Transverse colon (tissue), 4 donors: ENCODE measurements at regions of chr5 and their contacts with region 1.

Region 1: GRCh38 chr5:144260121-144260520 is 89.4 kb downstream of the KCTD16 start:
- DNase-seq: no peak
- H3K4me3 ChIP-seq: no peak overlapping the region
- H3K27ac ChIP-seq: no peak overlapping the region
- H3K4me1 ChIP-seq: no peaks in the 10 kb centered on the region
- H3K27me3 ChIP-seq: no peaks in the 10 kb centered on the region
- CTCF ChIP-seq: no peak
- EP300 ChIP-seq: no peak
- POLR2A ChIP-seq: no peak

Region 2: GRCh38 chr5:143094087-143094521 is 1166.0 kb before region 1 on chr5:
- in situ Hi-C with region 1: no loop called
- intact Hi-C with region 1: loop called (anchors 5 kb)
- DNase-seq: no peak
- H3K4me3 ChIP-seq: peak overlapping the region in 1 of 4 donors; percentile 13
- H3K27ac ChIP-seq: no peak overlapping the region
- H3K4me1 ChIP-seq: peaks cover 0 to 5% (median 0%) of the 10 kb centered on the region in 4 donors
- H3K27me3 ChIP-seq: no peaks in the 10 kb centered on the region
- CTCF ChIP-seq: no peak
- EP300 ChIP-seq: no peak
- POLR2A ChIP-seq: no peak

Region 3: GRCh38 chr5:144219869-144220268 is 40.3 kb before region 1 on chr5:
- in situ Hi-C with region 1: no loop called
- intact Hi-C with region 1: no loop called
- DNase-seq: no peak
- H3K4me3 ChIP-seq: no peak overlapping the region
- H3K27ac ChIP-seq: no peak overlapping the region
- H3K4me1 ChIP-seq: no peaks in the 10 kb centered on the region
- H3K27me3 ChIP-seq: no peaks in the 10 kb centered on the region
- CTCF ChIP-seq: no peak
- EP300 ChIP-seq: no peak
- POLR2A ChIP-seq: no peak

Region 4: GRCh38 chr5:144352330-144352729 is 92.2 kb after region 1 on chr5:
- in situ Hi-C with region 1: no loop called
- intact Hi-C with region 1: no loop called
- DNase-seq: no peak
- H3K4me3 ChIP-seq: no peak overlapping the region
- H3K27ac ChIP-seq: no peak overlapping the region
- H3K4me1 ChIP-seq: no peaks in the 10 kb centered on the region
- H3K27me3 ChIP-seq: no peaks in the 10 kb centered on the region
- CTCF ChIP-seq: no peak
- EP300 ChIP-seq: no peak
- POLR2A ChIP-seq: no peak